Activated CD4-positive, alpha-beta T cell treated with anti-CD3 and anti-CD28 coated beads, Interleukin-2, amount 10 ng/mL, durations not matched to agents 7 days and 5 days (primary cell): ENCODE measurements at regions of chr19 and their contacts with region 1.

Region 1: GRCh38 chr19:46944918-46945628 is 74.6 kb upstream of the NPAS1 start:
- DNase-seq: no peak
- H3K4me3 Mint-ChIP-seq: no peak overlapping the region
- H3K27ac Mint-ChIP-seq: no peak overlapping the region
- H3K4me1 Mint-ChIP-seq: peaks cover 13% of the 10 kb centered on the region
- H3K27me3 Mint-ChIP-seq: no peaks in the 10 kb centered on the region

Region 2: DNA sequence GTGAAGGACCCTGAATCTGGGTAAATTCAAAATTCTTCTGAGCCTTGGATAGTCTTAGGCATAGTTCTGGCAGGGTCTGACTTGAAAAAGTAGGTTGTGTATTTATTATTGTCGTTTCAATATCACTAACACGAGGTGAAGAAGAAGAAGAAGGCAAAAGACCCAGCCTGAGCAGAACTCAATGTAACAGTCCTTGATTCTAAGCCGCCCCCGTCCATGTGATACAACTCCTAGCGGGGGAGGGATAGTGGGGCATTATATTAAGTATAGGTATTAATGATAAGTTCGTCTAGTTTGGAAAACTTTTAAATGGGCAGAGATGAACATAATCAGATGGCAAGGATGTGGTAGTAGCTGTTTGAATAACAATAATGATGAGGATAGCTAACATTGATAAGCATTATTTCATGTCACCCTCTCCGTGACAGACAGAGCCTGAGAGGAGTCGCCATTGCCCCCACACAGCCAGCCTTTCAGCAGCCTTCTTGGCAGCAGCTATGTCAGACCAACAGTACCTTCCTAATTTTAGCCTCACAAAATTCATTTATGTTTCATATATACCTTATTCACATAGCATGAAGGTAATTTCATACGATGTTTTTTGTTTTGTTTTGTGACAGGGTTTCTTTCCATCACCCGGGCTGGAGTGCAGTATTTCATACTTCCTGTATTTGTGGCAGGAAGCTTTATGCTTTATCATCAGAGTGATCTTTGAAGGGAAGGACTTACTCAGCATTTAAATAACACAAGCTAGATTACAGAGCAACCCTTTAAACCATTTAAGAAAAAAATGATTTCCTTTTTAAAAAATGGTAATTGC is 10.1 kb after region 1 on chr19:
- CTCF ChIA-PET with region 1: interaction called, 10 read pairs
- POLR2A ChIA-PET with region 1: no interaction called
- DNase-seq: peak; percentile 61
- H3K4me3 Mint-ChIP-seq: peak overlapping the region; percentile 76
- H3K27ac Mint-ChIP-seq: peak overlapping the region; percentile 93
- H3K4me1 Mint-ChIP-seq: peaks cover 66% of the 10 kb centered on the region
- H3K27me3 Mint-ChIP-seq: no peaks in the 10 kb centered on the region